A549 (cell line): ENCODE measurements at regions of chr17 and their contacts with region 1.

Region 1: DNA sequence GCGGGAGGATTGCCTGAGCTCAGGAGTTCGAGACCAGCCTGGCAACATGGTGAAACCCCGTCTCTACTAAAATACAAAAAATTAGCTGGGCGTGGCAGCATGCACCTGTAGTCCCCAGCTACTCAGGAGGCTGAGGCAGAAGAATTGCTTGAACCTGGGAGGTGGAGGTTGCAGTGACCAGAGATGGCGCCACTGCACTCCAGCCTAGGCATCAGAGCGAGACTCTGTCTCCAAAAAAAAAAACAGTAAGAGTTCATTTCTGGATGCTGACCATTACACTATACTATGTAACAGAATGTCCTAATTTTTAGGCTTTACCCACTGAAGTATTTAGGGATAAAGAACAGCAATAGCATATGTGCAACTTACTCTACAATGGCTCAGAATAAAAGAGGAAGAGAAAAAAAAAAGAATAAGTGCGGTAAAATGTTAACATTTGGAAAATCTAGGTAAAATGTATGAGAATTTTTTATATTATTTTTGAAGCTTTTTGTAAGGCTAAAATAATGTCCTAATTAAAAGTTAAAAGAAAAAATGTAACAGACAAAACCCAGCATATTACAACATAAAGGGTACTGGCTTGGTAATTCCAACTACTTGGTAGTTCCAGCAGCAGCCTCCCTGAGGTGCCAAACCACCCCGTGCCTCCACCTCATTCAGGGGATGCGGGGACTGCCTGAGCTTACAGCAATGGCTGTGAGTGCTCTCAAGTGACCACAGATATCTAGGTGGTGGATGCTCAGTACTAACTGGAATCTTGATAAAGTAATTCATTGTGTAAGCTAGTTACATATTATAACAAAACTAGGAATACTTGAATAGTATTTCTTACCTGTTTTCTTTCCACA is 10.9 kb downstream of the COPS3 start:
- DNase-seq: peak in 1 of 2 experiments; percentile 46
- ATAC-seq: peak; percentile 59 to 78; a peak in 4 of 6 replicates
- H3K4me3 ChIP-seq: no peak overlapping the region
- H3K27ac ChIP-seq: no peak overlapping the region
- H3K4me1 ChIP-seq: no peaks in the 10 kb centered on the region
- CTCF ChIP-seq: peak; percentile 48
- EP300 ChIP-seq: no peak
- POLR2A ChIP-seq: no peak
- RAD21 ChIP-seq: peak in 1 of 2 experiments; percentile 35; a peak in 2 of 5 replicates

Region 2: GRCh38 chr17:17258998-17259397 is 11.2 kb before region 1 on chr17:
- CTCF ChIA-PET with region 1: interaction called, 15 read pairs
- POLR2A ChIA-PET with region 1: interaction called, 4 read pairs
- DNase-seq: no peak
- ATAC-seq: no peak
- H3K4me3 ChIP-seq: no peak overlapping the region
- H3K27ac ChIP-seq: no peak overlapping the region
- H3K4me1 ChIP-seq: no peaks in the 10 kb centered on the region
- CTCF ChIP-seq: no peak
- EP300 ChIP-seq: no peak
- POLR2A ChIP-seq: no peak
- RAD21 ChIP-seq: no peak

Region 3: GRCh38 chr17:17320188-17320910 is 50.2 kb after region 1 on chr17:
- CTCF ChIA-PET with region 1: no interaction called
- POLR2A ChIA-PET with region 1: no interaction called
- DNase-seq: no peak
- ATAC-seq: no peak
- H3K4me3 ChIP-seq: no peak overlapping the region
- H3K27ac ChIP-seq: no peak overlapping the region
- H3K4me1 ChIP-seq: no peaks in the 10 kb centered on the region
- CTCF ChIP-seq: no peak
- EP300 ChIP-seq: no peak
- POLR2A ChIP-seq: no peak
- RAD21 ChIP-seq: no peak

Region 4: GRCh38 chr17:17551361-17551760 is 281.2 kb after region 1 on chr17:
- CTCF ChIA-PET with region 1: no interaction called
- POLR2A ChIA-PET with region 1: no interaction called
- DNase-seq: no peak
- ATAC-seq: no peak; a peak in 1 of 6 replicates
- H3K4me3 ChIP-seq: no peak overlapping the region
- H3K27ac ChIP-seq: no peak overlapping the region
- H3K4me1 ChIP-seq: no peaks in the 10 kb centered on the region
- CTCF ChIP-seq: no peak
- EP300 ChIP-seq: no peak
- POLR2A ChIP-seq: no peak
- RAD21 ChIP-seq: no peak